Prostate gland (tissue), 2 donors: ENCODE measurements at regions of chr18 and their contacts with region 1.

Region 1: DNA sequence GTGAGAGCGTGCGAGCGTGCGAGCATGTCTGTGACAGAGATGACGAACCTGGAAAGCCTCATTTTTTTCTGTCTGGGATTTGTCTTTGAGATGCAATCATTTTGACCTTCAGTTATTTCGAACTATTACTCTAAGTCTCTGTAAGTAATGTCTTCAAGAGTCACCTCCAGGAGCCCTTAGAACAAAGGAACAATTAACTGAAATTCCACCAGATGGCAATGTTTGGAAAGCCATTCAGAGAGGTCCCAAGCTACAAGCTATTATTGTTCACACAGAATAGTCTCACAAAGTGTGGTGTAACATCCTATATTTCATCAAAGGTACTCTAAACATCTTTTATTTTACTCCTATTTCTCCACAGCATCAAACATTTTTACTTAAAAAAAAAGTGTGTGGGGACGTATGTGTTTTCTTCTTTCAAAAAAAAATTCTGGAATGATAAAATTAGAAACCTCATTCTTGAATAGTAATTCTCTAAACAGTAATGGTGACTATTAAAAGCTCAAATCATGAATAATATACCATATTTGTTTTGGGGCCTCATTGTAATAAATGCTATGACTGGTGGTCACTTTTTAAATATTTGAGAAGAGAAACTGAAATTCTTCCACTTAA is 35.1 kb upstream of the MAPRE2 start:
- DNase-seq: peak; percentile 12
- H3K4me3 ChIP-seq: no peak overlapping the region
- H3K27ac ChIP-seq: no peak overlapping the region
- H3K4me1 ChIP-seq: no peaks in the 10 kb centered on the region
- H3K27me3 ChIP-seq: no peaks in the 10 kb centered on the region
- CTCF ChIP-seq: peak; percentile 20 to 63 (median 54)
- POLR2A ChIP-seq: no peak

Region 2: GRCh38 chr18:34971313-34971712 is 34.8 kb before region 1 on chr18:
- intact Hi-C with region 1: no loop called
- DNase-seq: no peak
- H3K4me3 ChIP-seq: no peak overlapping the region
- H3K27ac ChIP-seq: no peak overlapping the region
- H3K4me1 ChIP-seq: no peaks in the 10 kb centered on the region
- H3K27me3 ChIP-seq: no peaks in the 10 kb centered on the region
- CTCF ChIP-seq: no peak
- POLR2A ChIP-seq: no peak

Region 3: DNA sequence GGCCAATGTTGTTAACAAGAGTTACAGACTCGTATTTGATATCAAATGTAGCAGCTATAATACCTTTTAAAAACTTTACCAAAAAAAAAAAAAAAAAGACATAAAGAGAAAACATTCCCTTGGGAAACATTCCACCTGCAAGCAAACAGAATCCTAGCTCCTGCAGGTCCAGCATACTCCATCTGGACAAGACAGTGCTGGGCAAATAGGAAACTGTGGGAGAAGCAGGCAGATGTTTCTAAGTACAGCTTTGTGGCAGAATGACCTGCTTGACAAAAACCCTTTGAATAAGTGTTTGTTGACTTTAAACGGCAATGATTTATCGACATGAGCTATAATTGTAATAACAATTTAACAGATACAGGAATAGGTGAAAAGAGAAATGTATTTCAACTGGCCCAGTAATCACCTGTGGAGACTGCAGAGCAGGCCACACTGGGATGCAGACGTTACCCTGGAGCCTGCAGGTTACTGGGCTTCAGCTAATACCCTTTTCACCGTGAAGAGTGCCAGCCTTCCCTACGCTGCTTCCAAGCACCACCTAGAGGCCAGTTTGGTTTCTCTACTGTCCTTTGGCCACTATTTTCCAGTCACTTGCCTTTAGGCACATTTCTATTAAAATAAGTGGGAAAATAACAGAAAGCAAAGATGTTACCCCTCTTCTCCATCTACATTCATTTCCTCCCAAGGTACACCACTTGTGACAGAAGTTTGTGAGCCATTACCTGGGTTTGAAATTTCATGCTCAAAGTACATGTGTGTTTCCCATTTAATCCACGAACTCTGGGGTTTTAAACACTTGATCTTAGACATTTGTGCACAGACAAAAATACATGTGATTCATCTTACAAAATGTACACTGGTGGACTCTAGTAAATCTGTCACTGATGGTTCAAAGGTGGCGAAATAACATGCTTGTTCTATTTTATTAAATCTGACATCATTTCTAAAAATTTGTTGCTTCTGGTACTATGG is 137.8 kb after region 1 on chr18:
- intact Hi-C with region 1: loop called (anchors 2 kb)
- DNase-seq: peak; percentile 38
- H3K4me3 ChIP-seq: no peak overlapping the region
- H3K27ac ChIP-seq: no peak overlapping the region
- H3K4me1 ChIP-seq: no peaks in the 10 kb centered on the region
- H3K27me3 ChIP-seq: no peaks in the 10 kb centered on the region
- CTCF ChIP-seq: peak in 3 of 4 experiments; percentile 52 to 71 (median 69)
- POLR2A ChIP-seq: no peak

Region 4: GRCh38 chr18:35231052-35231451 is 225.0 kb after region 1 on chr18:
- intact Hi-C with region 1: loop called (anchors 10 kb)
- DNase-seq: peak; percentile 78
- H3K4me3 ChIP-seq: no peak overlapping the region
- H3K27ac ChIP-seq: no peak overlapping the region
- H3K4me1 ChIP-seq: no peaks in the 10 kb centered on the region
- H3K27me3 ChIP-seq: no peaks in the 10 kb centered on the region
- CTCF ChIP-seq: peak; percentile 79 to 90 (median 86)
- POLR2A ChIP-seq: no peak

Region 5: DNA sequence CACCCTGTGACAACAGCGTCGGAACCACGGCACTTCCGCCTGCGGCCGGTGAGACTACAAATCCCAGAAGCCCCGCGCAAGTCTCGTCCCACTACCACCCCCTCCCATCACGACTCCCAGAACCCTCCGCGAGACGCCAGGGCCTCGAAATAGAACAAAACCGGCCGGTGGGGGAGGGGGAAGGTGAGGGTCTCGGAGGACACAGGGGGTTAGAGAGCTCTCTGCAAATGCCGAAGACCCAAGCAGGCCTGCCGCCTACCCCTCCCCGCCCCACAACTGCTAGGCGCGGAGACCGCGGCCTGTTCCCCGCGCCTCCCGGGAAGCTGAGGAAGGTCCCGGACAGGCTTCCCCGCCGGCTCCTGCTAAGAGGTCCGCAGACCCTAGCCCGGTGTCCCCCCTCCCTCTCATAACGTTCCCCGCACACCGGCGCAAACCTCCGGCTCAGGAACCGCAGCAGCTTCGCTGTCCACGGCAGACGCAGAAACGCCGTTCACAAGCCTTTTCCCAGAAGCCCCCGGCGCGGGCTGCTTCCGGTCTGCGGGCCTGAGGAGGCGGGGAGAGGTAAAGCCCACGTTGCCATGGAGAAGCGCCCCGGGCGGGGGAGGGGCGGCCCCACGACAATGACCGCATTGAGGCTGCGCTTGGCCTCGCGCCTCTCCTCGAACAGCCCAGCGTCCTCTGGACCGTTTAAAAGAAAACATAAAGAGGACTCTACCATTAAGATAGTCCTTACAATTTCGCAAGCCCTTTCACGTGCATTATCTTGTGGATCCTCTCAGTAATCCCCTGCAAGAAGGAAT is 338.1 kb after region 1 on chr18 and contains the start of gene ZNF24:
- intact Hi-C with region 1: loop called (anchors 10 kb)
- DNase-seq: peak; percentile 95
- H3K4me3 ChIP-seq: peak within 1 kb of the TSS; percentile 92 to 95
- H3K27ac ChIP-seq: peak within 1 kb of the TSS; percentile 98
- H3K4me1 ChIP-seq: no peaks in the 10 kb centered on the region
- H3K27me3 ChIP-seq: no peaks in the 10 kb centered on the region
- CTCF ChIP-seq: peak in 1 of 4 experiments; percentile 4
- POLR2A ChIP-seq: peak; percentile 69
- total RNA-seq, gene ZNF24: 39.4 to 53.4 TPM